ENCODE measurements at regions of chr16 and their contacts with region 1.

Region 1: DNA sequence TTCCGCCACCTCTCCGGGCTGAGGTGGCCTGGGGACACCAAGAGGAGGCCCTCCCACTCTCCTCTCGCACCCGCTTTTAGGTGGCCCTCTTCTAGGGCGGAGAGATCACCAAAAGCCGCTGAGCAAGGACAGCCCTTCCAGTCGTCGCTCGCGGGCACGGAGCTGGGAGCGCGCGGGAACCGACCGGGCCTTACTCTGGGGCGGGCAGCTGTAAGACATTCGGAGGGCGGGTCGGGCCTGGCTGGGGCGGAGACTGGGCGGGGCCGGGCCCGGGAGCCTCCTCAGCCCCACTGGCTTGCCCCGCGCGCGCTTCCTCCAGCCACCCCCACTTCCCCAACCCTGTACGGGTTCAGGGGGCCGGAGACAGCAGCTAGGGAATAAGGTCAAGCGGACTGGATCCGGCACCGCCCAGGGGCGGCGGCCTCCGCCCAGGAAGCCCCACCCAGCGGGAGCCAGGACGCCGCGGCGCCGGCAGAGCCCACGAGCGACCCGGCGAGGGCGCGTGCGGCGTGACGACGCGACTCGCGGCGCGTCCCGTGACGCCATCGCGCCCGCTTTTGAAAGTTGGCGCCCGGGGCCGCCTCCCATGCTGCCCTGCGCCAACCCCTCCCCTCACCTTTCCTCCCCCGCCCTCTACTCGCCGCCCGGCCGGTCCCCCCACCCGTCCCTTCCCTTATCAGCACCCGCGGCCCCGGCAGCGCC is 351 bp upstream of the CTCF start:
- DNase-seq: peak; percentile 96
- ATAC-seq: peak; percentile 71 to 76
- H3K4me3 ChIP-seq: peak overlapping the region; percentile 69 to 97 (median 80)
- H3K27ac ChIP-seq: peak overlapping the region; percentile 90 to 100 (median 100)
- H3K4me1 ChIP-seq: peaks cover 24 to 35% of the 10 kb centered on the region in 2 donors
- H3K27me3 ChIP-seq: no peaks in the 10 kb centered on the region
- CTCF ChIP-seq: no peak
- POLR2A ChIP-seq: peak; percentile 61 to 73

Region 2: DNA sequence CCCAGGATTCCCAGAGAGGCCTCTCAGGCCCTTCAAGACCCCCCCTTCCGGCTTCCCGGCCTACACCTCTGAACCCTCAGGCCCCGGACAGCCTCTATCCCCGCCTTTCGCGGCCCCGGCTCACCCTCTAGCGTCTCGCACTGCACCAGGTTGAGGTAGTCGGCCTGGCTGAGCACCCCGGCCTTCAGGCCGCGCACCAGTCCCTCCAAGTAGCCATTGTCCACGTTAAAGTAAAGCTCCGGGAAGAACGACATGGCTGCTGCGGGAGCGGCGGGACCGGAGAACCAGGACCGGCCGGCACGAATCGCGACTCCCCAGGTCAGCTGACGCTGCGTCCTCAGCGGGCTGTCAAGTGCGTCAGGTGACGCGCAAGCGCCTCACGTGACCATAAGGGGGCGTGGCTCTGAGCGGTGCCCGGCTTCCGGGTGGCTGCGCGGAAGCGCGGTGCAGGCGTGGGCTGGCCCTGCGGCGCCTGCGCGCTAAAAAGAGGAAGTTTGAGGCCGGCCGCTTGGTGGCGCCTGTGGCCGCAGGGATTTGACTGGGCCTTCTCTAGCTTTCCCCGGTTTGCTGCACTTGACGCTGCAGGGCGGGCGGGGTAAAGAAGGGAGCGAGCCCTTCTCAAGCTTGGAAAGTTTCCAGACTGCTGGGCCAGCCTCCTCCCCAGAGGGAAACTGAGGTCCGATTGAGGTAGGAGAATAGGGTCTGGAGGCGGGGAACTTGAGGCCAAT is 81.0 kb before region 1 on chr16 and contains the start of gene ATP6V0D1:
- in situ Hi-C with region 1: no loop called
- intact Hi-C with region 1: loop called (anchors 2 kb)
- DNase-seq: peak; percentile 95 to 98
- ATAC-seq: peak; percentile 97
- H3K4me3 ChIP-seq: peak within 1 kb of the TSS; percentile 65 to 98 (median 92)
- H3K27ac ChIP-seq: peak within 1 kb of the TSS; percentile 82 to 97 (median 95)
- H3K4me1 ChIP-seq: peaks cover 28 to 40% of the 10 kb centered on the region in 2 donors
- H3K27me3 ChIP-seq: no peaks in the 10 kb centered on the region
- CTCF ChIP-seq: peak; percentile 88 to 95 (median 94)
- POLR2A ChIP-seq: peak; percentile 88 to 90
- total RNA-seq, gene ATP6V0D1: 117 to 211 (median 157) TPM

Region 3: GRCh38 chr16:67528222-67528869 is 33.6 kb before region 1 on chr16 and contains the start of gene RIPOR1:
- in situ Hi-C with region 1: no loop called
- intact Hi-C with region 1: loop called (anchors 1 kb)
- DNase-seq: peak in 1 of 2 donors; percentile 59
- ATAC-seq: peak; percentile 57 to 64
- H3K4me3 ChIP-seq: peak within 1 kb of the TSS; percentile 77 to 97 (median 93)
- H3K27ac ChIP-seq: peak within 1 kb of the TSS; percentile 91 to 99 (median 93)
- H3K4me1 ChIP-seq: peaks cover 16 to 28% of the 10 kb centered on the region in 2 donors
- H3K27me3 ChIP-seq: no peaks in the 10 kb centered on the region
- CTCF ChIP-seq: peak in 1 of 5 experiments; percentile 14
- POLR2A ChIP-seq: no peak
- total RNA-seq, gene RIPOR1: 10.6 to 65.4 (median 25.1) TPM

Region 4: GRCh38 chr16:67632415-67633172 is 70.6 kb after region 1 on chr16:
- in situ Hi-C with region 1: loop called in 1 of 4 experiments (anchors 5 kb)
- intact Hi-C with region 1: no loop called
- DNase-seq: no peak
- ATAC-seq: no peak
- H3K4me3 ChIP-seq: no peak overlapping the region
- H3K27ac ChIP-seq: no peak overlapping the region
- H3K4me1 ChIP-seq: no peaks in the 10 kb centered on the region
- H3K27me3 ChIP-seq: no peaks in the 10 kb centered on the region
- CTCF ChIP-seq: no peak
- POLR2A ChIP-seq: no peak

Region 5: DNA sequence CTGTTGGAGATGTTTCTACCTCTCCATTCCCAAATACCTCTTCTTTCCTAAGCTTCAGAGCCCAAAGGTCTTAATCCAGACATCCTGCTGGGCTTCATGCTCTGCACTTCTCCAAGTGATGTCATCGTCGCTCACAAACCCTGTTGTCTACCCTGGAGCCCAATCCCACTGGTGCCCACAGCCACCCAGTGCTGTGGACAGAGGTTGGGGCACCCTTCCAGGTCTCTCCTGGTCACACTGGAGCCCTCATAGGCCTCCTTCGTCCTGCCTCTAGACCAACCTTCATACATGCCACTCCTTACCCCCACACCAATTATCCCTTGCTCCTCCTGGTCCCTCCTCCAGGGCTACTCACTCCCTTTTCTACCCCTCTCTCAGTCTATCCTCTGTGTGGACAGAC is 88.6 kb after region 1 on chr16:
- in situ Hi-C with region 1: no loop called
- intact Hi-C with region 1: no loop called
- DNase-seq: no peak
- ATAC-seq: no peak
- H3K4me3 ChIP-seq: no peak overlapping the region
- H3K27ac ChIP-seq: no peak overlapping the region
- H3K4me1 ChIP-seq: peaks cover 4 to 6% of the 10 kb centered on the region in 2 donors
- H3K27me3 ChIP-seq: peaks cover 79 to 85% (median 80%) of the 10 kb centered on the region in 3 donors
- CTCF ChIP-seq: no peak
- POLR2A ChIP-seq: no peak

Region 6: GRCh38 chr16:67660564-67661028 is 98.6 kb after region 1 on chr16 and contains the start of gene PARD6A:
- in situ Hi-C with region 1: loop called in 2 of 4 experiments (anchors 10 kb)
- intact Hi-C with region 1: loop called (anchors 1 kb)
- DNase-seq: peak; percentile 88 to 90
- ATAC-seq: peak; percentile 83 to 88
- H3K4me3 ChIP-seq: peak within 1 kb of the TSS; percentile 66 to 83 (median 76)
- H3K27ac ChIP-seq: peak within 1 kb of the TSS; percentile 91 to 97 (median 94)
- H3K4me1 ChIP-seq: peaks cover 19% of the 10 kb centered on the region in 2 donors
- H3K27me3 ChIP-seq: no peaks in the 10 kb centered on the region
- CTCF ChIP-seq: peak in 3 of 5 experiments; percentile 15 to 23 (median 20)
- POLR2A ChIP-seq: peak in 1 of 2 donors; percentile 61
- total RNA-seq, gene PARD6A: 2.7 to 17.3 (median 12.5) TPM

Region 7: GRCh38 chr16:67806428-67807147 is 244.6 kb after region 1 on chr16 and contains the starts of genes RANBP10 and TSNAXIP1:
- in situ Hi-C with region 1: no loop called
- intact Hi-C with region 1: loop called (anchors 2 kb)
- DNase-seq: peak; percentile 98 to 99
- ATAC-seq: peak; percentile 97 to 98
- H3K4me3 ChIP-seq: peak within 1 kb of the TSS; percentile 86 to 99 (median 96)
- H3K27ac ChIP-seq: peak within 1 kb of the TSS; percentile 92 to 99 (median 97)
- H3K4me1 ChIP-seq: peaks cover 32 to 35% of the 10 kb centered on the region in 2 donors
- H3K27me3 ChIP-seq: no peaks in the 10 kb centered on the region
- CTCF ChIP-seq: no peak
- POLR2A ChIP-seq: peak; percentile 92 to 97
- total RNA-seq, gene RANBP10: 12.6 to 46.6 (median 14.8) TPM
- total RNA-seq, gene TSNAXIP1: 0.27 to 11.0 (median 0.56) TPM in 3 of 4 donors, not detected in the other